AG04449 (cell line): ENCODE measurements at regions of chr17 and their contacts with region 1.

Region 1: GRCh38 chr17:80082403-80083135 is 18.8 kb upstream of the GAA start:
- DNase-seq: no peak
- H3K4me3 ChIP-seq: peak overlapping the region; percentile 8; the same call in 1 of the 2 replicates
- CTCF ChIP-seq: peak; percentile 73

Region 2: DNA sequence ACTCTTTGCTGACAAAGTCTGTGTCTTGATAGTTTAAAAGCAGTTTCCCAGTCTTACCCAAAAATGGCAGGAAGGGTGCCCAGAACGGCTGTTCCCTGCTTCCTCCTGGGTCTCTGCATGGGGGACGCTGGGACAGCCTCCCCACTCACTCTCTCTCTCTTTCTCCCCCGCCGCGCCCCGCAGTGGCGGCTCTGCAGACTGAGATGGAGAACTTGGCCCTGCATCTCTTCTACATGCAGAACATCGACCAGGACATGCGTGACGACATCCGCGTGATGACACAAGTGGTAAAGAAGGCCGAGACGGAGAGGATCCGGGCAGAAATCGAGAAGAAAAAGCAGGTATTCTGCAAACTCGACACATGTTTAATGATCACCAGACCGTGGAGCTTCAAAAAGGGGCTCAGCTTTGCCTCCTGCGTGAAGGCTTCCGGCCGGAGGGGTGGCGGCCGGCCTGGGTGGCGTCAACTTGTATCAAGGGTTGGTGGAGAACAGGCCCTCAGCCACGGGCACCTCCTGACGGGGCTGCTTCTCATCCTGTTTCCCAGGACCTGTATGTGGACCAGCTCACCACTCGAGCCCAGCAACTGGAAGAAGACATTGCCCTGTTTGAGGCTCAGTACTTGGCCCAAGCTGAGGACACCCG is 24.1 kb before region 1 on chr17:
- CTCF ChIA-PET with region 1: interaction called, 11 read pairs
- POLR2A ChIA-PET with region 1: no interaction called
- DNase-seq: no peak
- H3K4me3 ChIP-seq: no peak overlapping the region
- CTCF ChIP-seq: no peak

Region 3: GRCh38 chr17:80092959-80093358 is 10.4 kb after region 1 on chr17:
- CTCF ChIA-PET with region 1: interaction called, 31 read pairs
- POLR2A ChIA-PET with region 1: no interaction called
- DNase-seq: no peak
- H3K4me3 ChIP-seq: no peak overlapping the region
- CTCF ChIP-seq: no peak

Region 4: GRCh38 chr17:80124351-80124981 is 41.9 kb after region 1 on chr17:
- CTCF ChIA-PET with region 1: interaction called, 21 read pairs
- POLR2A ChIA-PET with region 1: no interaction called
- DNase-seq: no peak
- H3K4me3 ChIP-seq: no peak overlapping the region
- CTCF ChIP-seq: peak; percentile 60

Region 5: GRCh38 chr17:80361495-80362220 is 279.1 kb after region 1 on chr17:
- CTCF ChIA-PET with region 1: interaction called, 11 read pairs
- POLR2A ChIA-PET with region 1: no interaction called
- DNase-seq: no peak
- H3K4me3 ChIP-seq: no peak overlapping the region
- CTCF ChIP-seq: peak; percentile 41